ENCODE measurements at regions of chr20 and their contacts with region 1.

Region 1: GRCh38 chr20:645318-646106 is 7.5 kb downstream of the SRXN1 start:
- DNase-seq: peak; percentile 25
- ATAC-seq: peak; percentile 96
- H3K4me3 ChIP-seq: no peak overlapping the region
- H3K27ac ChIP-seq: 0 out of 2 replicates have a peak overlapping the region, but pooled peaks have one; percentile 7
- H3K4me1 ChIP-seq: no peaks in the 10 kb centered on the region
- H3K27me3 ChIP-seq: no peaks in the 10 kb centered on the region
- CTCF ChIP-seq: peak; percentile 93 to 99 (median 97)
- EP300 ChIP-seq: no peak
- POLR2A ChIP-seq: no peak; the same call in 1 of the 2 replicates
- RAD21 ChIP-seq: peak; percentile 86

Region 2: DNA sequence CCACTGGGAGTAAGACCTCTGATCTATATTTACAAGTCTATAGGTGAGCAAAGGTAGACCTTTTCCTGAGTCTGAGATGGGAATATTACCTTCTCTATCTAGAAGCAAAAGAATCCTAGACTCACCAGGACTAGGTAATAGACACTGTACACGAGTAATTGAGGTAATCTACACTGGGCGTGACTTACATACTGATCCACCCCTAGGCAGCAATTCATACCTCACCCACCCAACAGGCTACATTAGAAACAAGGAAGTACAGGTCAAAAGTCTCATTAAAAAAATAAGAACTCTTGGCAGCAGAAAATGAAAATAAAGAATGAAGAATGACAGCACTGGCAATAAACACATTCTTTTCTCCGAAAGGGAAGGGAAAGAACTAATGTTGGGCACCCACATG is 109.6 kb before region 1 on chr20:
- CTCF ChIA-PET with region 1: interaction called, 10 read pairs
- POLR2A ChIA-PET with region 1: interaction called, 6 read pairs
- RAD21 ChIA-PET with region 1: interaction called, 3 read pairs
- SMC1A ChIA-PET with region 1: no interaction called
- in situ Hi-C with region 1: no loop called
- intact Hi-C with region 1: no loop called
- DNase-seq: no peak
- ATAC-seq: peak; percentile 75
- H3K4me3 ChIP-seq: no peak overlapping the region
- H3K27ac ChIP-seq: no peak overlapping the region
- H3K4me1 ChIP-seq: peaks cover 22% of the 10 kb centered on the region
- H3K27me3 ChIP-seq: no peaks in the 10 kb centered on the region
- CTCF ChIP-seq: no peak
- EP300 ChIP-seq: no peak
- POLR2A ChIP-seq: no peak
- RAD21 ChIP-seq: no peak

Region 3: DNA sequence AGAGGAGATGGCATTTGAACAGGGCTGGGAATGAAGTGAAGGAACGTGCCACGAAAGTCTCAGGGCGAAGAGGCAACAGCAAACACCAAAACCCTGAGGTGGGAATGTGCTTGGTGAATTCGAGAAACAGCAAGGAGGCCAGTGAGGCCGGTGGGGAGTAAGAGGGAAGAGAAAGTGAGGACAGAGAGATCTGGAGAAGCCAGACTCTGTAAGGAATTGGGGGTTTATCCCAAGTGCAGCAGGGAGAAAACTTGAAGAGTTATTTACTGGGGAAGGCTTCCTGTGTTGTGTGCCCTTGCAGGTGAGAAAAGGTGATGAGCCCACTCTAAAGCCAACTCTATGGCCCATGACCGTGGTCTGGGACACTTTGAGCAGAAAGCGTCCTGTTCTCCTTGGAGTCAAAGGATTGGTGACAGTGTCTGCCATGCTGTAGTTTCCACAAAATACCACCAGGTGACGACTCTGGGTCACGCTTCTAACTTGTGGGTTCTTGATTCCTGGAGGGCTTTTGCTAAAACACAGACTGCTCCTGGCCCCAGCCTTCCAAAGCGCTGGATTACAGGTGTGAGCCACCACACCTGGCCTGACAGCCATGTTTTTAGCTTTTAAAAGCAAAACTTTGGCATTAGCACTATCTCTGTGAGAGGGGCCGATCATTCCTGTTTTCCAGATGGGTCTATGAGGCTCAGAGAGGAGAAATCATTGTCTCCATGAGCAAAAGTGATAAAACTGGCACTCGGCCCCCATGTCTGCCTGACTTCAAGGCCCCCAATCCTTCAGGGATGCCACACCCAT is 83.9 kb before region 1 on chr20:
- CTCF ChIA-PET with region 1: interaction called, 190 read pairs
- POLR2A ChIA-PET with region 1: interaction called, 3 read pairs
- RAD21 ChIA-PET with region 1: interaction called, 35 read pairs
- SMC1A ChIA-PET with region 1: interaction called, 75 read pairs
- in situ Hi-C with region 1: loop called (anchors 5 kb)
- intact Hi-C with region 1: loop called (anchors 1 kb)
- DNase-seq: no peak
- ATAC-seq: peak; percentile 93
- H3K4me3 ChIP-seq: no peak overlapping the region
- H3K27ac ChIP-seq: no peak overlapping the region
- H3K4me1 ChIP-seq: no peaks in the 10 kb centered on the region
- H3K27me3 ChIP-seq: no peaks in the 10 kb centered on the region; a peak in 1 of 4 replicates
- CTCF ChIP-seq: peak; percentile 95 to 99 (median 99); a peak in 5 of 6 replicates
- EP300 ChIP-seq: no peak
- POLR2A ChIP-seq: no peak
- RAD21 ChIP-seq: peak; percentile 94

Region 4: GRCh38 chr20:588932-589672 is 56.4 kb before region 1 on chr20:
- CTCF ChIA-PET with region 1: interaction called, 35 read pairs
- POLR2A ChIA-PET with region 1: no interaction called
- RAD21 ChIA-PET with region 1: interaction called, 15 read pairs
- SMC1A ChIA-PET with region 1: interaction called, 15 read pairs
- in situ Hi-C with region 1: no loop called
- intact Hi-C with region 1: no loop called
- DNase-seq: peak; percentile 66
- ATAC-seq: peak; percentile 96
- H3K4me3 ChIP-seq: no peak overlapping the region
- H3K27ac ChIP-seq: no peak overlapping the region
- H3K4me1 ChIP-seq: peaks cover 15% of the 10 kb centered on the region
- H3K27me3 ChIP-seq: no peaks in the 10 kb centered on the region
- CTCF ChIP-seq: peak; percentile 18 to 61 (median 22); a peak in 4 of 6 replicates
- EP300 ChIP-seq: peak in 1 of 2 experiments; percentile 34; a peak in 1 of 4 replicates
- POLR2A ChIP-seq: no peak
- RAD21 ChIP-seq: peak; percentile 53; the same call in 1 of the 2 replicates

Region 5: DNA sequence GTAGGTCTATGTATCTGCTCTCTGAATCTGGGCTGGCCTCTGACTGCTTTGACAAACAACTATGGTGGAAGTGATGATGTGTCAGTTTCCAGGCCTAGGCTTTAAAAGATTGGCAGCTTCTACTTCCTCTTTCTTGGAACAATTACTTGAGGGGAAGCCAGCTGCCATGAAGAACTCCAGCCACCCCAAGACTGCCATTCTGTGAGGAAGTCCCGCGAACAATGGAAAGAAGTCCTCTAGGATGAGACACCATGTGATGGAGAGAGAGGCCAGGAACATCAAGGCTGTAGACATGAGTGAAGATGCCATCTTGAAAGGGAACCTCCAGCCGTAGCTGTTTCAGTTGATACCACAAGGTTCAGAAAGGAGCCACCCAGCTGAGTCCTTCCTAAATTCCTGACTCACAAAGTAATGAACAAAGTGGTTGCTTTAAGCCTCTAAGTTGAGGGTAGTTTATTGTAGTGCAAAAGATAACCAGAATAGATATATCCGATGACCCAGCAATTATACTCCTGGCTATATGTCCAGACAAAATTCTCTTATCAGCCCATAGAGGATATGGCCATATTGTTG is 20.1 kb before region 1 on chr20:
- CTCF ChIA-PET with region 1: interaction called, 26 read pairs
- POLR2A ChIA-PET with region 1: no interaction called
- RAD21 ChIA-PET with region 1: no interaction called
- SMC1A ChIA-PET with region 1: interaction called, 6 read pairs
- in situ Hi-C with region 1: no loop called
- intact Hi-C with region 1: no loop called
- DNase-seq: no peak
- ATAC-seq: no peak
- H3K4me3 ChIP-seq: no peak overlapping the region
- H3K27ac ChIP-seq: no peak overlapping the region
- H3K4me1 ChIP-seq: no peaks in the 10 kb centered on the region
- H3K27me3 ChIP-seq: peaks cover 0 to 1% of the 10 kb centered on the region in 2 experiments; a peak in 1 of 4 replicates
- CTCF ChIP-seq: no peak
- EP300 ChIP-seq: no peak
- POLR2A ChIP-seq: no peak
- RAD21 ChIP-seq: no peak

Region 6: GRCh38 chr20:740141-740540 is 94.6 kb after region 1 on chr20:
- CTCF ChIA-PET with region 1: interaction called, 15 read pairs
- POLR2A ChIA-PET with region 1: no interaction called
- RAD21 ChIA-PET with region 1: interaction called, 19 read pairs
- SMC1A ChIA-PET with region 1: interaction called, 4 read pairs
- in situ Hi-C with region 1: no loop called
- intact Hi-C with region 1: loop called (anchors 5 kb)
- DNase-seq: no peak
- ATAC-seq: no peak
- H3K4me3 ChIP-seq: no peak overlapping the region
- H3K27ac ChIP-seq: no peak overlapping the region
- H3K4me1 ChIP-seq: no peaks in the 10 kb centered on the region
- H3K27me3 ChIP-seq: peaks cover 0 to 2% of the 10 kb centered on the region in 2 experiments; a peak in 1 of 4 replicates
- CTCF ChIP-seq: no peak
- EP300 ChIP-seq: no peak
- POLR2A ChIP-seq: no peak
- RAD21 ChIP-seq: no peak

Region 7: GRCh38 chr20:750801-751200 is 105.3 kb after region 1 on chr20:
- CTCF ChIA-PET with region 1: no interaction called
- POLR2A ChIA-PET with region 1: no interaction called
- RAD21 ChIA-PET with region 1: no interaction called
- SMC1A ChIA-PET with region 1: no interaction called
- in situ Hi-C with region 1: no loop called
- intact Hi-C with region 1: no loop called
- DNase-seq: no peak
- ATAC-seq: no peak
- H3K4me3 ChIP-seq: no peak overlapping the region
- H3K27ac ChIP-seq: no peak overlapping the region
- H3K4me1 ChIP-seq: no peaks in the 10 kb centered on the region
- H3K27me3 ChIP-seq: no peaks in the 10 kb centered on the region; a peak in 1 of 4 replicates
- CTCF ChIP-seq: no peak
- EP300 ChIP-seq: no peak
- POLR2A ChIP-seq: no peak
- RAD21 ChIP-seq: no peak

Measured in GM12878 (cell line).